CD8-positive, alpha-beta memory T cell (primary cell): ENCODE measurements at regions of chr3 and their contacts with region 1.

Region 1: GRCh38 chr3:126971891-126972351 is 11.0 kb upstream of the PLXNA1 start:
- DNase-seq: no peak
- H3K4me3 ChIP-seq: no peak overlapping the region
- H3K4me3 Mint-ChIP-seq: no peak overlapping the region
- H3K27ac ChIP-seq: no peak overlapping the region
- H3K27ac Mint-ChIP-seq: no peak overlapping the region
- H3K4me1 ChIP-seq: no peaks in the 10 kb centered on the region
- H3K4me1 Mint-ChIP-seq: no peaks in the 10 kb centered on the region
- H3K27me3 ChIP-seq: no peaks in the 10 kb centered on the region
- H3K27me3 Mint-ChIP-seq: peaks cover 16 to 28% of the 10 kb centered on the region in 2 donors

Region 2: GRCh38 chr3:126781406-126781805 is 190.5 kb before region 1 on chr3:
- CTCF ChIA-PET with region 1: no interaction called
- POLR2A ChIA-PET with region 1: no interaction called
- DNase-seq: no peak
- H3K4me3 ChIP-seq: no peak overlapping the region
- H3K4me3 Mint-ChIP-seq: peak overlapping the region in 1 of 7 donors; percentile 24
- H3K27ac ChIP-seq: no peak overlapping the region
- H3K27ac Mint-ChIP-seq: no peak overlapping the region
- H3K4me1 ChIP-seq: no peaks in the 10 kb centered on the region
- H3K4me1 Mint-ChIP-seq: peaks cover 4 to 9% (median 7%) of the 10 kb centered on the region in 3 donors
- H3K27me3 ChIP-seq: no peaks in the 10 kb centered on the region
- H3K27me3 Mint-ChIP-seq: no peaks in the 10 kb centered on the region

Region 3: DNA sequence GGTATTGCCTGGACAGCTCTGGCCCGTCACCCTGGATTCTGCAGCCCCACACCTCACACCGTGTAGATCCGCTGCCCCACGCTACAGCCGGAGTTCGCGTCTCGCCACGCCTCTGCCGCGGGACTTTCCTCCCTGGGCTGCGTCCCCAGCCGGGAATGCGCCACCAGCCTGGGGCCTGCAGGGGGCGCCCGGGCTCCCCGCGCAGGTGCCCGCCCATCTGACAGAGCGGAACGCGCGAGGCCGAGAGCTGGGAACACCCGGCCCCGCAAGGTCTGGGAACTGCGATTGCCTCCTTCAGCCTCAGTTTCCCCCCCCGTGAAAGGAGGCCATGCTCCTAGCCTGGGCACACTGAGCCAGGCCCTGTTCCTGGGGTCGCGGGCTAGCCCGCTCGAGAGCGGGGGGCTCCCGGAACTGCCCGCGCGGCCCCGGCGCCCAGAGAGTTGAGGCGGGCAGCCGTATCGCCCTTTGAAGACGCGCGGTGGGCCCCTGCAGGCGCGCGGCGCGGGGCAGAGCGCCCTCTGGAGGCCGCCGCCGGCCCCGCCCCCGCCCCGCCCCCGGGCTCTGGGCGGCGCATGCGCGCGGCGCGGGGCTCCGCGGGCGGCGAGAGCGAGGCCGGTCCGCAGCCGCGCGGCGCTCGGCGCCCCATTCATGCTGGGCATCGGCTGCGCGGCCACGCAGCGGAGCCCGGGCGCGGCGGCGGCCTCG is 10.7 kb after region 1 on chr3 and contains the start of gene PLXNA1:
- CTCF ChIA-PET with region 1: interaction called, 27 read pairs
- POLR2A ChIA-PET with region 1: no interaction called
- DNase-seq: peak; percentile 84 to 95 (median 90)
- H3K4me3 ChIP-seq: peak within 1 kb of the TSS; percentile 86
- H3K4me3 Mint-ChIP-seq: peak within 1 kb of the TSS; percentile 84 to 93 (median 89)
- H3K27ac ChIP-seq: peak within 1 kb of the TSS; percentile 75
- H3K27ac Mint-ChIP-seq: peak within 1 kb of the TSS; percentile 94 to 99 (median 97)
- H3K4me1 ChIP-seq: peaks cover 10% of the 10 kb centered on the region
- H3K4me1 Mint-ChIP-seq: peaks cover 11 to 21% (median 12%) of the 10 kb centered on the region in 3 donors
- H3K27me3 ChIP-seq: no peaks in the 10 kb centered on the region
- H3K27me3 Mint-ChIP-seq: peaks cover 2 to 9% of the 10 kb centered on the region in 2 donors
- total RNA-seq, gene PLXNA1: 14.4 to 15.9 TPM

Region 4: GRCh38 chr3:127035677-127036076 is 63.8 kb after region 1 on chr3:
- CTCF ChIA-PET with region 1: no interaction called
- POLR2A ChIA-PET with region 1: no interaction called
- DNase-seq: peak in 1 of 5 donors; percentile 37
- H3K4me3 ChIP-seq: no peak overlapping the region
- H3K4me3 Mint-ChIP-seq: no peak overlapping the region
- H3K27ac ChIP-seq: no peak overlapping the region
- H3K27ac Mint-ChIP-seq: no peak overlapping the region
- H3K4me1 ChIP-seq: no peaks in the 10 kb centered on the region
- H3K4me1 Mint-ChIP-seq: no peaks in the 10 kb centered on the region
- H3K27me3 ChIP-seq: no peaks in the 10 kb centered on the region
- H3K27me3 Mint-ChIP-seq: peaks cover 3% of the 10 kb centered on the region in 2 donors